GM12878 (cell line): ENCODE measurements at regions of chr9 and their contacts with region 1.

Region 1: DNA sequence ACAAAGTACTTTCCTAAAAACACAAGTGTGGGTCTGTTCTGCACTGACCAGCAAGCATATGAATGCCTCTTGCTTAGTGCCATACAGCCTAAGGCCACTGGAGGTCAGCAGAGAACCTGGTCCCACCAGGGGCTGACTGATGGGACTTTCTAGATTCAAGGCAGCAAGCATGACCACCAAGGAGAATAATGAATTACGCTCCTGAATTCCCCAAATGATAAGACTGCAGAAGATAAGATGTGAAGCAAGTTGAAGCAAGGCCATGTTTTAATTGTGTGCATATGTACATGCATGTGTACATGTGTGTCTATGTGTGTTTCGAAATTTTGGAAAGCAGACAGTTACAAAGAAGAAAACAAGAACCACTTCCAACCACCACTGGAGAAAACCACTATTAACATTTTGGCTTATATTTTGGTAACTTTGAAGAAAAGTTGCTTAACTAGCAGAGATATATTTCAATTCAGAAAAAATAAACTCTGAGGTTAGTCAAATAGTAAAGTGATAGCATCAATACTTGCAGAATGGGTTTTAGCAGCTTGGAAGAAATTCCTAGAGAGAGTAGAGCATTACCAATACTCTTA is 70.5 kb downstream of the ERP44 start:
- DNase-seq: peak; percentile 66
- ATAC-seq: peak; percentile 96
- H3K4me3 ChIP-seq: no peak overlapping the region
- H3K27ac ChIP-seq: peak overlapping the region; percentile 58; the same call in 1 of the 2 replicates
- H3K4me1 ChIP-seq: peaks cover 28% of the 10 kb centered on the region
- H3K27me3 ChIP-seq: no peaks in the 10 kb centered on the region
- CTCF ChIP-seq: peak; percentile 96 to 98 (median 98)
- EP300 ChIP-seq: no peak
- POLR2A ChIP-seq: no peak
- RAD21 ChIP-seq: peak; percentile 100

Region 2: GRCh38 chr9:100011062-100011681 is 17.1 kb before region 1 on chr9:
- CTCF ChIA-PET with region 1: interaction called, 10 read pairs
- POLR2A ChIA-PET with region 1: no interaction called
- RAD21 ChIA-PET with region 1: no interaction called
- SMC1A ChIA-PET with region 1: interaction called, 5 read pairs
- in situ Hi-C with region 1: no loop called
- intact Hi-C with region 1: no loop called
- DNase-seq: peak; percentile 38
- ATAC-seq: peak; percentile 73
- H3K4me3 ChIP-seq: no peak overlapping the region
- H3K27ac ChIP-seq: no peak overlapping the region
- H3K4me1 ChIP-seq: no peaks in the 10 kb centered on the region
- H3K27me3 ChIP-seq: no peaks in the 10 kb centered on the region
- CTCF ChIP-seq: peak; percentile 48 to 58 (median 56)
- EP300 ChIP-seq: no peak
- POLR2A ChIP-seq: no peak
- RAD21 ChIP-seq: peak; percentile 76

Region 3: DNA sequence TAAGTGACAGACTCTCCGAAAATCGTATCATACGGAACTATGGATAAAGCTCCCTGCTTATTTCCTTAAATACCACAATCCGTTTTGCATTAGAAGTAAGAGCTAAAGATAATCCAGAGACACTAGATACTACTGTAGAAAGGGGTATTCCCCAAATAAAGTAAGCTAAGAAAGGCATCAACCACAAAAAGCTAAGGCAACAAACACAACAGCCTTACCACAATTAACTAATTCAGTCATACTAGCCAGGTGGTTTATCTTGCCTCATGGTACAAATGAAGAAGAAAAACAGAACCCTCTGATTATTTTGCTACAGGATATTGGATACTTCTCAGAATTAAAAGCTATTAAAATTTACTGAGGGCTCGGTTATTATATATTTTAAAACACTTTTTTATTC is 56.4 kb after region 1 on chr9:
- CTCF ChIA-PET with region 1: interaction called, 4 read pairs
- POLR2A ChIA-PET with region 1: interaction called, 3 read pairs
- RAD21 ChIA-PET with region 1: interaction called, 20 read pairs
- SMC1A ChIA-PET with region 1: interaction called, 24 read pairs
- in situ Hi-C with region 1: no loop called
- intact Hi-C with region 1: loop called (anchors 1 kb)
- DNase-seq: peak; percentile 71
- ATAC-seq: peak; percentile 86
- H3K4me3 ChIP-seq: no peak overlapping the region
- H3K27ac ChIP-seq: peak overlapping the region; percentile 94
- H3K4me1 ChIP-seq: peaks cover 32% of the 10 kb centered on the region
- H3K27me3 ChIP-seq: no peaks in the 10 kb centered on the region
- CTCF ChIP-seq: no peak
- EP300 ChIP-seq: peak; percentile 95 to 99
- POLR2A ChIP-seq: no peak
- RAD21 ChIP-seq: no peak

Region 4: DNA sequence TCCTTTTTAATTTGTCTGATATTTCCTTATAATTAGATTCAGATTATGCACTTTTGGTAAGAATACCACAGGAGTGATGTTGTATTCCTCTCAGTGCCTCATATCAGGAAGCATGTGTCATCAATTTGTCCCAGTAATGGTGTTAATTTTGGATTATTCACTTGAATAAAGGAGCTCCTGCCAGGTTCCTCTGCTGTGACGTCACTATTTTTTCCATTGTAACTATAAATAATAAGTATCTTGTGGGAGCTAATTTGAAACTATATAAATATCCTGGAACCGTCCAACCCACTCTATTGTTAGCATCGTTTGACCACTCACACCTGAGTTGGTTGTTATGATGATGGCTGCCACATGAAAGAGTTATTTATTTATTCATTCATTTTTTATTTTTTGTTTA is 178.6 kb after region 1 on chr9:
- CTCF ChIA-PET with region 1: interaction called, 143 read pairs
- POLR2A ChIA-PET with region 1: interaction called, 4 read pairs
- RAD21 ChIA-PET with region 1: interaction called, 13 read pairs
- SMC1A ChIA-PET with region 1: interaction called, 115 read pairs
- in situ Hi-C with region 1: no loop called
- intact Hi-C with region 1: no loop called
- DNase-seq: no peak
- ATAC-seq: no peak
- H3K4me3 ChIP-seq: no peak overlapping the region
- H3K27ac ChIP-seq: no peak overlapping the region
- H3K4me1 ChIP-seq: no peaks in the 10 kb centered on the region
- H3K27me3 ChIP-seq: no peaks in the 10 kb centered on the region
- CTCF ChIP-seq: no peak
- EP300 ChIP-seq: no peak
- POLR2A ChIP-seq: no peak
- RAD21 ChIP-seq: no peak

Region 5: GRCh38 chr9:100322954-100323536 is 294.8 kb after region 1 on chr9:
- CTCF ChIA-PET with region 1: interaction called, 12 read pairs
- POLR2A ChIA-PET with region 1: no interaction called
- RAD21 ChIA-PET with region 1: interaction called, 3 read pairs
- SMC1A ChIA-PET with region 1: interaction called, 14 read pairs
- in situ Hi-C with region 1: loop called (anchors 5 kb)
- intact Hi-C with region 1: loop called (anchors 1 kb)
- DNase-seq: no peak
- ATAC-seq: peak; percentile 69
- H3K4me3 ChIP-seq: no peak overlapping the region
- H3K27ac ChIP-seq: no peak overlapping the region
- H3K4me1 ChIP-seq: no peaks in the 10 kb centered on the region
- H3K27me3 ChIP-seq: no peaks in the 10 kb centered on the region
- CTCF ChIP-seq: peak; percentile 55 to 74 (median 65)
- EP300 ChIP-seq: no peak
- POLR2A ChIP-seq: no peak
- RAD21 ChIP-seq: peak; percentile 65